ENCODE measurements at regions of chr1 and their contacts with region 1.

Region 1: GRCh38 chr1:235971571-235972310 is 93.1 kb downstream of the NID1 start:
- DNase-seq: peak; percentile 95
- ATAC-seq: peak; percentile 98
- H3K4me3 Mint-ChIP-seq: peak overlapping the region; percentile 68
- H3K27ac Mint-ChIP-seq: peak overlapping the region; percentile 93
- H3K4me1 Mint-ChIP-seq: peaks cover 18% of the 10 kb centered on the region
- H3K27me3 Mint-ChIP-seq: peaks cover 10% of the 10 kb centered on the region

Region 2: DNA sequence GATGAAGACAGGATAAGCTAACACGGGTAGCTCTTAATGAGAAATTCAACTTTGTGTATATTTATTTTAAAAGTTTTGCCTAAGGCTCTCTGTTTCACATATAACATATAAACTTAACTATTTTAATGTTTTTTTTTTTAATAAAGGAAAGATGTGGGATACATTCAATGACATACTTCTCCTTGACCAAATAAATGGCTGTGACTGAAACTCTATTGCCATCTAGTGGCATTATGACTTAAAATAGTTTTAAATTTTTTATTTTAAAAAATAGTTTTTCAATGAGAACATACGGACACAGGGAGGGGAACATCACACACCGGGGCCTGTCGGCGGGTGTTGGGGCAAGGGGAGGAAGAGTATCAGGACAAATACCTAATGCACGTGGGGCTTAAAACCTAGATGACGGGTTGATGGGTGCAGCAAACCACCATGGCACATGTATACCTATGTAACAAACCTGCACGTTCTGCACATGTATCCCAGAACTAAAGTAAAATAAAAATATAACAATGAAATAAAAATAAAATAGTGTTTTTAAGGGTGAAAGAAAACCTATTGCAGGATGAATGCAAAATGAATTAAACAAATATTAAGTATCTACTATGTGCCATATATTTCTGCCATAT is 188.5 kb before region 1 on chr1:
- CTCF ChIA-PET with region 1: interaction called, 31 read pairs
- DNase-seq: no peak
- ATAC-seq: no peak
- H3K4me3 Mint-ChIP-seq: no peak overlapping the region
- H3K27ac Mint-ChIP-seq: no peak overlapping the region
- H3K4me1 Mint-ChIP-seq: no peaks in the 10 kb centered on the region
- H3K27me3 Mint-ChIP-seq: no peaks in the 10 kb centered on the region

Region 3: DNA sequence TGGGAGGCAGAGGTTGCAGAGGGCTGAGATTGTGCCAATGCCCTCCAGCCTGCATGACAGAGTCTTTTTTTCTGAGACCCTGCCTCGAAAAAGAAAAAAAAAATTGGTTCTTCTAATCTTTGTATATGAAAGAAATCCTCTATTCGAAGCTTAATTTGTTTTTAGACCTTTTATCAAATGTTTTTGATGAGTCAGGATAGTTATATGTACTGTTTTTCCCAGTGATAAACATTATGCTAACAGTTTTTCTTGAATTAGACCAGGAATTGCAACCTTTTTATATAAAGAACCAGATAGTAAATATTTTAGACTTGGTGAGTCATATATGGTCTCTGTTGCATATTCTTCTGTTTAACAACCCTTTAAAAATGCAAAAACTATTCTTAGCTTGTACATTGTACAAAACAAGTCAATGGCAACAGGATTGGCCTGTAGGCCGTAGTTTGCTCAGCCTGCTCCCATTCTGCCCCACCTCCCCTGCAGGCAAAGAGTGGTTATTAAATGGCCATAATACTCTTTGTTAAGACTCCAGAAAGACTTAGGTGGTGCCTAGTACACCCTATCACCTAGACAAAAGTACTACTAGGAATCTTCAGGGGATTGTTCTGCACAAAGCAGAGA is 150.3 kb before region 1 on chr1:
- CTCF ChIA-PET with region 1: no interaction called
- DNase-seq: no peak
- ATAC-seq: no peak
- H3K4me3 Mint-ChIP-seq: no peak overlapping the region
- H3K27ac Mint-ChIP-seq: no peak overlapping the region
- H3K4me1 Mint-ChIP-seq: peaks cover 11% of the 10 kb centered on the region
- H3K27me3 Mint-ChIP-seq: no peaks in the 10 kb centered on the region

Region 4: DNA sequence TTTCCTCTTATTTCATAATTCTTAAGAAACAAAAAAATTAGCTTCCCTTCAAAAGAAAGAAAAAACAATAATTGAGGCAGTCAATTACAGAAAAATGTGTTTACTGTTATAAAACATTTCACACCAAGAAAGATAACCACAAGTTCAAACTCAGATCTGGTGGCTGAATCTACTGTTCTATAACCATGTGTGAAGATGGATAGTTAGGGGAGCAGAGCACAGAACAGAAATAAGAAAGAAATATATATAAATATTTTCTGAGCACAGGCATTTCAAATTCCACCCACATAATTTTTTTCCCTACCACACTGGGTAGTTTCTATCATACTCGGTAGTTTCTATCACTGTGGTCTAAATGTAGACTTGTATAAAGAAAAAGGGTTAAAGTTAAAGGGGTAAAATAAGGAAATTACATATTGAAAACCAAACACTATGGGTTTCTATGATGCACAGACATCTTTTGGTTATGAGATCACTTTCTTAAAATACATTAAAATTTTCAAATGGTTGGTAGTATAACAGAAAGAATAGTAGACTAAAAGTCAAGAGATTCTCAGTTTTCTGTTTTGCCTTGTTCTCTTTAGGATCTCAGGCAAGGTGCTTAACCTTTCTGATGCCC is 115.8 kb before region 1 on chr1:
- CTCF ChIA-PET with region 1: interaction called, 20 read pairs
- DNase-seq: no peak
- ATAC-seq: peak; percentile 37
- H3K4me3 Mint-ChIP-seq: peak overlapping the region; percentile 23
- H3K27ac Mint-ChIP-seq: peak overlapping the region; percentile 64
- H3K4me1 Mint-ChIP-seq: peaks cover 48% of the 10 kb centered on the region
- H3K27me3 Mint-ChIP-seq: no peaks in the 10 kb centered on the region

Region 5: DNA sequence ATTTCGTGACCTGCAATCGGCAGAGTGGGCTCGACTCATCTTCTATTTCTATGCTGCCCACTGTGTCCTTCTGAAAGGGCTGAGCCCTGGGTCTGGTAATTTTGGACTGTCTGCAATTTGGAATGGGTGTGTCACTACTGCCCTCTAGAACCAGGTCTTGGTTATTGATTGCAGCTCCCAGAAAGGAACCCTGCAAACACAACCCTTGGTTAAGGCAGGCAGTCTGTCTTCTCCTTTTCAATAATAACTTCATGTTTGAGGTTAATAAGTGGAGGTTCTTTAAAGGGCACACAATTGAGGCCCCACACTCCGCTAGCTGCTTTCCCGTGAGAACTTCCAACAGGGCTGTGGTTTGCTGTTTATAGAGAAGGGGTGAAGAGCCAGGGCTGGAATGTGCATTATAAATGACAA is 25.2 kb before region 1 on chr1:
- CTCF ChIA-PET with region 1: interaction called, 11 read pairs
- DNase-seq: no peak
- ATAC-seq: peak; percentile 57
- H3K4me3 Mint-ChIP-seq: no peak overlapping the region
- H3K27ac Mint-ChIP-seq: no peak overlapping the region
- H3K4me1 Mint-ChIP-seq: peaks cover 12% of the 10 kb centered on the region
- H3K27me3 Mint-ChIP-seq: peaks cover 5% of the 10 kb centered on the region

Region 6: DNA sequence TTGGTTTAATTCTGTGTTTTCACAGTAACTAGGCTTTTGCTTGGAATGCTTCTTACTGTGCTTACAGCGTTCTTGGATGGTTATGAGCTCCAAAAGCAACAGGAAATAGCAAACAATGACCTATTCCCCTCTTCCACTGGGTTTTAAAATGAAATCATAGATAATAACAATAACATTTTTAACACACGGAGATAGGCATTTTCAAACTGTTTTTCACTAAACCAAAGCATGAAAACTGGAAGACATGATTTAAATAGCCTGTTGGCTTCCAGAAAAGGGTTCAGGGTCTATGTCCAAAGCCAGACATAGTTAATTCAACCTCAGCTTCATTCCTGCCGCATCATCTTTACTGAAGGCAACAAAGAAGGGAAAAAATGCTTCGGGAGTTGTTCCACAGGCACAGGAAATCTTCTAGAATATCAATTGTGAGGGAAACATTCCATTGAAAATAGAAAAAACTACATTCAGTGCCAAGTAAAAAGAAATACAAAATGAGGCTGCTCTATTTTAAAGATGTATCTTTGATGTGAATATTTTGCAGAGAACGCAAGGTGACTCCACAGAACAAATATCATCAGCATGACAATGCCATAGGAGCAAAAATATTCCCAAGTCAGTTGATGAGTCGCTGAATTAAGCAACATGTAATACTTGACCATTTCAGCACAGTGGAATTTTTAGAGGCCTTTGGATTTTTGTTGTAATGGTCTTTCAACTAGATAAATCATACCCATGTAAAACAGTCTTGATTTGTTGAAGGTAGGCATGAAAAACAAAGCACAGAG is 12.5 kb after region 1 on chr1:
- CTCF ChIA-PET with region 1: interaction called, 16 read pairs
- DNase-seq: no peak
- ATAC-seq: no peak
- H3K4me3 Mint-ChIP-seq: no peak overlapping the region
- H3K27ac Mint-ChIP-seq: no peak overlapping the region
- H3K4me1 Mint-ChIP-seq: peaks cover 9% of the 10 kb centered on the region
- H3K27me3 Mint-ChIP-seq: peaks cover 19% of the 10 kb centered on the region

Region 7: DNA sequence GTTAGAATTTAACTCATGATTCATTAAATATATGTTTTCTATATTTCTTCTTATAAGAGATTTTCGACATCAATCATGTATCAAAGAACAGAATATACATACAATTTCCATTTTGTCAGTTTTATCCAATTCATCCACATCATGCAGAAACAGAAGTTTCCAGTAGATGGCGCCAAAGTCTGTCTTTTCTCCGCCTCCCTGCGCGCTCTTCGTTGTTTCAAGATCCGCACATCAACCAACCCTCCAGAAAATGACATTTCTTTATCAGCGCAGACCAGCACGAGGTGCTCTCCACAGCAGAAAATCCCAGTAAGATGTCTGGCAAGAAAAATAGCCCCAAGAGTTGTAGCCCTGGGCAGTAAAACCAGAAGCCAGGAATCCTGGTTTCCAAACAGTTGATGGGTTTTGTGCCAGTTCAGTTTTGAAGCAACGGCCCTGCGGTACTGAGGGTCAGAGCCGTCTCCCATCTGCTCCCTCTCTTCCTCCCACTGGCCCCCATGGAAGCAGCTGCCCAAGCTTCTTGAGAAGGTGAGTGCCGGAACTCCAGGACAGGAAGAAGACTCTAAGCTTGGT is 132.0 kb after region 1 on chr1:
- CTCF ChIA-PET with region 1: no interaction called
- DNase-seq: peak; percentile 62
- ATAC-seq: peak; percentile 68
- H3K4me3 Mint-ChIP-seq: no peak overlapping the region
- H3K27ac Mint-ChIP-seq: no peak overlapping the region
- H3K4me1 Mint-ChIP-seq: peaks cover 14% of the 10 kb centered on the region
- H3K27me3 Mint-ChIP-seq: peaks cover 14% of the 10 kb centered on the region

Region 8: DNA sequence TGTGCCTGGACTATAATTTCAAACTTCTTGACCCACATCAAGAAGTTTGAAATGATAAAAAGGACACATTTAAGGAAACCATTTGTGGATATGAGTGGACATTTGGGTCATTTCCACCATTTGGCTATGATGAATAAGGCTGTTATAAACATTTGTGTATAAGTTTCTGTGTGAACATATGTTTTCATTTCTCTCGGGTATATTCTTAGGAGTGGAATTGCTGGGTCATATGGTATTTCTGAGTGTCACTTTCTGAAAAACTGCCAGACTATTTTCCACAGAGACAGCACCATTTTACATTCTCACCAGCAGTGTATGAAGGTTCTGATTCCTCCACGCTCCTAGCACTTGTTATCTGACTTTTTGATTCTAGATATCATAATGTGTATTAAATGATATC is 221.4 kb after region 1 on chr1:
- CTCF ChIA-PET with region 1: no interaction called
- DNase-seq: no peak
- ATAC-seq: no peak
- H3K4me3 Mint-ChIP-seq: no peak overlapping the region
- H3K27ac Mint-ChIP-seq: no peak overlapping the region
- H3K4me1 Mint-ChIP-seq: no peaks in the 10 kb centered on the region
- H3K27me3 Mint-ChIP-seq: no peaks in the 10 kb centered on the region

Region 9: GRCh38 chr1:236228411-236228810 is 256.7 kb after region 1 on chr1:
- CTCF ChIA-PET with region 1: no interaction called
- DNase-seq: no peak
- ATAC-seq: no peak
- H3K4me3 Mint-ChIP-seq: no peak overlapping the region
- H3K27ac Mint-ChIP-seq: no peak overlapping the region
- H3K4me1 Mint-ChIP-seq: no peaks in the 10 kb centered on the region
- H3K27me3 Mint-ChIP-seq: no peaks in the 10 kb centered on the region

Measured in activated CD8-positive, alpha-beta memory T cell treated with anti-CD3 and anti-CD28 coated beads, Interleukin-2, amount 10 ng/mL, durations not matched to agents 7 days and 5 days (primary cell).